ENCODE measurements at regions of chr19 and their contacts with region 1.

Region 1: DNA sequence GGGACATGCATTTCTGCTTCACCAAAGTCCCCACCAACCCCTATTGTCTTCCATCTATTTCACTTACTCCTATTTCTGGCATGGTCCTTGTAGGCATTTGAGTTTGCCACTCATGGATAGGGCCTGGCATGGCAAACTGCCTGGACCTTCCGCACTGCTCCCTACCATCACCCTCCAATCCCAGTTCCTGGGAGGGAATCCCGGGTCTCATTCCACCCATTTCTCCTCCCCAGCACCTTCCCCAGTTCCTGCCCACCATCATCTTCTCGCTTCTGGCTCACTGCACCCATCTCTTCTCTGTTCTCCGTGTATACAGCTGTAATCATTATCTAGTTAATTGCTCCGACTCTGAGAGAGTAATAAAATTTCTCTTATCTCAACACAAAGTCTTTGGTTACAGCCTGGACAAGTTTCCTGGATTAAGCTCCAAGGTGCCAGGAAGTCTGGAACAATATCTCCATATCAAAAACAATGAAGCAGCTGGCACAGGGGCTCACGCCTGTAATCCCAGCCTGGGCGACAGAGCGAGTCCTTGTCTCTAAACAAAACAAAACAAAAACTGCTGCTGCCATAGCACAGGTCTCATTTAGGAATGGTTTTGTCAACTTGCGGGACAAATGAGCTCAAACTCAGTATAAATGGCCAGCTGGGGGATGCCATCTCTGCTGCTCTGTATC is 17.0 kb upstream of the COX7A1 start:
- DNase-seq: no peak
- ATAC-seq: no peak
- H3K4me3 ChIP-seq: no peak overlapping the region
- H3K27ac ChIP-seq: no peak overlapping the region
- H3K4me1 ChIP-seq: peaks cover 4% of the 10 kb centered on the region; the same call in 1 of the 2 replicates
- H3K27me3 ChIP-seq: no peaks in the 10 kb centered on the region
- CTCF ChIP-seq: no peak
- POLR2A ChIP-seq: no peak
- RAD21 ChIP-seq: no peak

Region 2: DNA sequence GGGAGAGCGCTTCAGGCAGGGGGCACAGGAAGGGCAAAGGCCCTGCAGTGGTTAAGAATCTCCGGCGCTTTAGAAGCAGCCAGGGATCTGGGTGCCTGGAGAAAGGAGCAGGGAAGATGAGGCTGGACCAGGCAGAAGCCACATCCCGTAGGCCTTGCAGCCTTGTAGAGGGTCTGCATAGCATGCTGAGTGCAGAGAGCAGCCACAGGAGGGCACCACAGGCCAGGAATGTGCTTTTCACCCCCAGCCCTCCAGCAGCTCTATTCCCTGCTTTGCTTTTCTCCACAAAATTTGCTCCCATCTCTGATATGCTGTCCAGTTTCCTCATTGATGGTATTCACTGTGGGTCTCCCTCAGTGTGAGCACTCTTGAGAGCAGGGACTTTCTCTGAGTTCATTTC is 108.8 kb before region 1 on chr19:
- CTCF ChIA-PET with region 1: interaction called, 4 read pairs
- POLR2A ChIA-PET with region 1: no interaction called
- dilution Hi-C with region 1: no loop called
- in situ Hi-C with region 1: no loop called
- intact Hi-C with region 1: loop called (anchors 1 kb)
- DNase-seq: peak; percentile 63
- ATAC-seq: peak; percentile 97
- H3K4me3 ChIP-seq: no peak overlapping the region
- H3K27ac ChIP-seq: no peak overlapping the region
- H3K4me1 ChIP-seq: no peaks in the 10 kb centered on the region
- H3K27me3 ChIP-seq: no peaks in the 10 kb centered on the region
- CTCF ChIP-seq: peak; percentile 78
- POLR2A ChIP-seq: no peak
- RAD21 ChIP-seq: peak; percentile 83

Region 3: DNA sequence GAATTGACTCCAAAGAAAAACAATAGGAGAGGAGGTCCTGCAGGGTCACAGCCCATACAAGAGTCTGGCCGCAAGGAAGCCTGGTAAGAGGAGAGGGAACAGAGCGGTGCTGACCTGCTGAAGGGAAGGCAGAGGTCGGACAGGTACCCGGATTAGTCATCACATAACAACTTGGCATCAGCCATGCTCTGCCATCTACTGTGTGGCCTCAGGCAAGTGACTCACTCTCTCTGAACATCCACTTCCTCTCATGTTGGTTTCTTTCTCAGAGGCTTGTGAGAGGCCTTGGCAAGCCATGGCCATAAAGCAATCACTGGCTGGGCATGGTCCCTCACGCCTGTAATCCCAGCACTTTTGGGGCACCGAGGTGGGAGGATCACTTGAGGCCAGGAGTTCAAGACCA is 36.7 kb before region 1 on chr19:
- CTCF ChIA-PET with region 1: interaction called, 20 read pairs
- POLR2A ChIA-PET with region 1: no interaction called
- dilution Hi-C with region 1: no loop called
- in situ Hi-C with region 1: loop called (anchors 5 kb)
- intact Hi-C with region 1: loop called (anchors 1 kb)
- DNase-seq: peak; percentile 39
- ATAC-seq: no peak
- H3K4me3 ChIP-seq: no peak overlapping the region
- H3K27ac ChIP-seq: no peak overlapping the region
- H3K4me1 ChIP-seq: peaks cover 6% of the 10 kb centered on the region
- H3K27me3 ChIP-seq: no peaks in the 10 kb centered on the region
- CTCF ChIP-seq: no peak
- POLR2A ChIP-seq: no peak
- RAD21 ChIP-seq: no peak